Activated CD8-positive, alpha-beta T cell treated with anti-CD3 and anti-CD28 coated beads for 36 hours (primary cell): ENCODE measurements at regions of chr2 and their contacts with region 1.

Region 1: GRCh38 chr2:118046634-118047210 is 32.9 kb upstream of the CCDC93 start:
- DNase-seq: no peak
- ATAC-seq: no peak
- H3K4me3 Mint-ChIP-seq: no peak overlapping the region
- H3K27ac Mint-ChIP-seq: no peak overlapping the region
- H3K4me1 Mint-ChIP-seq: peaks cover 2% of the 10 kb centered on the region
- H3K27me3 Mint-ChIP-seq: peaks cover 36% of the 10 kb centered on the region
- CTCF ChIP-seq: peak; percentile 74

Region 2: GRCh38 chr2:118061135-118061955 is 14.6 kb after region 1 on chr2:
- CTCF ChIA-PET with region 1: interaction called, 39 read pairs
- POLR2A ChIA-PET with region 1: no interaction called
- intact Hi-C with region 1: no loop called
- DNase-seq: peak; percentile 4
- ATAC-seq: no peak
- H3K4me3 Mint-ChIP-seq: no peak overlapping the region
- H3K27ac Mint-ChIP-seq: no peak overlapping the region
- H3K4me1 Mint-ChIP-seq: peaks cover 6% of the 10 kb centered on the region
- H3K27me3 Mint-ChIP-seq: peaks cover 23% of the 10 kb centered on the region
- CTCF ChIP-seq: peak; percentile 30

Region 3: DNA sequence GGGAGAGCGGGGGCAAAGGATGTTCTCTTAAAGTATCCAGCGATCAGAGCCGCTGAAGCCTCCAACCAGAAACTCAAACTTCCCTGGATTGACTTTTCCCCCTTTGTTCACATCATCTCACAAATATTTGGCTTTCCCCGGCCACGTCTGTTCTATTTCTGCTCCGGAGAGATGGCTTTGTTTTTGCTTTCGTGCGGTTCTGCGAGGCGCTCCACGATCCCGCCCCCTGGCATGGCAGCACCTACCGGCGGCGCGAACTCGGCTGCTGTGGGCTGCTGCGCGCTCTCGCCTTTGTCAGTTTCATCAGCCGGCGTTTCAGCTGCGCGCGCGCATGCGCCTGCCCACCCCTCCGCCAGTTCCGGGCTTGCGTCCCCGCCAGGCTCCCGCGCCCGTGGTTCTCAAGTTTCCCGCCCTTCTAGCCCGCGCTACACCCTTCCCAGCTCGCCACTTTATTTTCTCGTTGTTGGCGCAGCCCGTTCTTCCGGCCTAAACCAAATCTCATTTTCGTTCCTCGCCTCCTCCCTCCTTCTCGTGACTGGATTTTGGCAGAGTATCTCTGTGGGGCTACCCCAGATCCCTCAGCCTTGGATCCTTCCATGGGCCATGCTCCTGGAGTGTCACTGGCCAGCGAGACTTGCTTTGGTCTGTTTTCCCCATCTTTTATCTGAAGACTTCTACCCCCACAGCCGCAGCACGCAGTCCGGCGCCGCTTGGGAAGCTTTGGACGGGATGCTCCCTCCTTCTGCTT is 139.6 kb after region 1 on chr2:
- CTCF ChIA-PET with region 1: interaction called, 3 read pairs
- POLR2A ChIA-PET with region 1: no interaction called
- intact Hi-C with region 1: loop called (anchors 10 kb)
- DNase-seq: peak; percentile 91
- ATAC-seq: peak; percentile 88
- H3K4me3 Mint-ChIP-seq: peak overlapping the region; percentile 89
- H3K27ac Mint-ChIP-seq: peak overlapping the region; percentile 97
- H3K4me1 Mint-ChIP-seq: peaks cover 14% of the 10 kb centered on the region
- H3K27me3 Mint-ChIP-seq: no peaks in the 10 kb centered on the region
- CTCF ChIP-seq: no peak

Region 4: DNA sequence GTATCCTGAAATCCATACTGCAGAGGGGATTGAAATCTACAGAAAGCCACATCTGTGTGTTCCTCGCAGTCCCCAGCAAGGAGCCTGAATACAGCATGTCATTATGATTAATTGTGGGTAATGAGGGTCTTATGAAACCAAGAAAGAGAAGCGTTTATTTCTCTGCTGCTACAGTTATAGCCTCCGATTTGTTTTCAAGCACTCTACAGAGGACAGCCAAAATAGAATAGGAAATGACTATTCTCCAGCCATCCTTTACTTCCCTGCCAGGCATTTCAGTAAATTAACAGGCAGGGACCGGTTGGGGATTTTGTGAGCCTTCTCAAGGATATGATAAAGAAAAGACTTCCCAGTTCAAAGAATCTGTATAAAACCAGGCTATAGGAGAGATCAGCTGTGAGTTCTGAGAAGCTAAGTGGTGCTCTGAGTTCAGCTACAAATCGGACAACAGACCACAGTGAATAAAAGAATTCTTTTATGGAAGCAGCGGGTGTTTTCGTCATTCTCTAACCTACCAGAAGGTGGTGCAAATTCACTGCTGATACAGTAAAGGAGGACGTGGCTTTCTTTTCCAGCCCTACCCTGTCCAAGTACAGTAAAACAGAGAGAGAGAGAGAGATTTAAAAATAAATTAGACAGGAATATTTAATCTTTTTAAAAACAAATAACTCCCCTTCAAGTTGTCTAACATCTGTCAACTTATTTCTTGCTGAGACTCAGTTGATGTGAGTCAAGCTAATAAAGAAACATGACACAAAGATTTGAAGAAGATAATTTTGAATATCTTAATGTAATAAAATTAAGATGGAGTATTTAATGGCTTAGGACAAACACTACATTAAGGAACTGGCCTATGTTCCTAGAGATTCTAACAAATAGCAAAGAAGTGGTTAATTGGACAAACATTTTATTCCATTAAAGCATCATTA is 175.2 kb after region 1 on chr2:
- CTCF ChIA-PET with region 1: interaction called, 10 read pairs
- POLR2A ChIA-PET with region 1: no interaction called
- intact Hi-C with region 1: no loop called
- DNase-seq: peak; percentile 52
- ATAC-seq: peak; percentile 69
- H3K4me3 Mint-ChIP-seq: no peak overlapping the region
- H3K27ac Mint-ChIP-seq: no peak overlapping the region
- H3K4me1 Mint-ChIP-seq: peaks cover 8% of the 10 kb centered on the region
- H3K27me3 Mint-ChIP-seq: peaks cover 55% of the 10 kb centered on the region
- CTCF ChIP-seq: peak; percentile 81

Region 5: GRCh38 chr2:118936936-118937335 is 890.2 kb after region 1 on chr2:
- CTCF ChIA-PET with region 1: no interaction called
- POLR2A ChIA-PET with region 1: no interaction called
- intact Hi-C with region 1: no loop called
- DNase-seq: no peak
- ATAC-seq: no peak
- H3K4me3 Mint-ChIP-seq: no peak overlapping the region
- H3K27ac Mint-ChIP-seq: no peak overlapping the region
- H3K4me1 Mint-ChIP-seq: peaks cover 4% of the 10 kb centered on the region
- H3K27me3 Mint-ChIP-seq: no peaks in the 10 kb centered on the region
- CTCF ChIP-seq: no peak